GM12878 (cell line): ENCODE measurements at regions of chr10 and their contacts with region 1.

Region 1: GRCh38 chr10:103396064-103396788 is at the starts of genes ATP5MK and PDCD11:
- DNase-seq: peak; percentile 92
- ATAC-seq: peak; percentile 98
- H3K4me3 ChIP-seq: peak within 1 kb of the TSS; percentile 89
- H3K27ac ChIP-seq: peak within 1 kb of the TSS; percentile 88
- H3K4me1 ChIP-seq: peaks cover 4% of the 10 kb centered on the region; the same call in 1 of the 2 replicates
- H3K27me3 ChIP-seq: no peaks in the 10 kb centered on the region
- CTCF ChIP-seq: peak; percentile 16 to 35 (median 31); a peak in 3 of 6 replicates
- EP300 ChIP-seq: peak in 1 of 2 experiments; percentile 40; a peak in 1 of 4 replicates
- POLR2A ChIP-seq: peak; percentile 97
- RAD21 ChIP-seq: 0 out of 2 replicates have a peak, but pooled peaks have one; percentile 3
- polyA plus RNA-seq, gene ATP5MK: 1,633 to 1,790 TPM
- polyA plus RNA-seq, gene PDCD11: 13.9 to 17.2 TPM

Region 2: GRCh38 chr10:103350501-103351260 is 45.5 kb before region 1 on chr10 and contains the start of gene PCGF6:
- CTCF ChIA-PET with region 1: no interaction called
- POLR2A ChIA-PET with region 1: interaction called, 5 read pairs
- RAD21 ChIA-PET with region 1: interaction called, 4 read pairs
- SMC1A ChIA-PET with region 1: interaction called, 3 read pairs
- in situ Hi-C with region 1: no loop called
- intact Hi-C with region 1: loop called (anchors 5 kb)
- DNase-seq: no peak
- ATAC-seq: peak; percentile 94
- H3K4me3 ChIP-seq: peak within 1 kb of the TSS; percentile 85
- H3K27ac ChIP-seq: peak within 1 kb of the TSS; percentile 82
- H3K4me1 ChIP-seq: no peaks in the 10 kb centered on the region
- H3K27me3 ChIP-seq: no peaks in the 10 kb centered on the region
- CTCF ChIP-seq: no peak; a peak in 1 of 6 replicates
- EP300 ChIP-seq: no peak
- POLR2A ChIP-seq: peak; percentile 82
- RAD21 ChIP-seq: no peak
- polyA plus RNA-seq, gene PCGF6: 6.5 to 8.2 TPM

Region 3: DNA sequence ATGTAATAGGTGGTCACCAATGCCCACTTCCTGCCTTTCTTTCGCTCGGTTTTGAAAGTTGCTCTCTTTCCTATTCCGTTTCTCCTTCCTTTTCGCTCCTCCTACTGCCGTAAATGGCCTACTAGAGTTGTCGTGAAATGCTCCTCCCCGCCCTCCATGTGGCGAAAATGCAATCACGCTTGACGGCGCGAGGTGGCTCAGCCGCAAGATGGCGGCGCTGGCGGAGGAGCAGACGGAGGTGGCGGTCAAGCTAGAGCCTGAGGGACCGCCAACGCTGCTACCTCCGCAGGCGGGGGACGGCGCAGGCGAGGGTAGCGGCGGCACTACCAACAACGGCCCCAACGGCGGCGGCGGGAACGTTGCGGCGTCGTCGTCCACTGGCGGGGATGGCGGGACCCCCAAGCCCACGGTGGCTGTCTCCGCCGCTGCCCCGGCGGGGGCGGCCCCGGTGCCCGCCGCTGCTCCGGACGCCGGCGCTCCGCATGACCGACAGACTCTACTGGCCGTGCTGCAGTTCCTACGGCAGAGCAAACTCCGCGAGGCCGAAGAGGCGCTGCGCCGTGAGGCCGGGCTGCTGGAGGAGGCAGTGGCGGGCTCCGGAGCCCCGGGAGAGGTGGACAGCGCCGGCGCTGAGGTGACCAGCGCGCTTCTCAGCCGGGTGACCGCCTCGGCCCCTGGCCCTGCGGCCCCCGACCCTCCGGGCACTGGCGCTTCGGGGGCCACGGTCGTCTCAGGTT is 28.3 kb before region 1 on chr10 and contains the start of gene TAF5:
- CTCF ChIA-PET with region 1: interaction called, 11 read pairs
- POLR2A ChIA-PET with region 1: interaction called, 17 read pairs
- RAD21 ChIA-PET with region 1: interaction called, 3 read pairs
- SMC1A ChIA-PET with region 1: interaction called, 23 read pairs
- in situ Hi-C with region 1: no loop called
- intact Hi-C with region 1: loop called (anchors 1 kb)
- DNase-seq: peak; percentile 95
- ATAC-seq: peak; percentile 82
- H3K4me3 ChIP-seq: peak within 1 kb of the TSS; percentile 75
- H3K27ac ChIP-seq: peak within 1 kb of the TSS; percentile 81
- H3K4me1 ChIP-seq: peaks cover 12% of the 10 kb centered on the region
- H3K27me3 ChIP-seq: no peaks in the 10 kb centered on the region
- CTCF ChIP-seq: no peak
- EP300 ChIP-seq: no peak
- POLR2A ChIP-seq: peak; percentile 86
- RAD21 ChIP-seq: no peak
- polyA plus RNA-seq, gene TAF5: 3.7 to 3.8 TPM

Region 4: DNA sequence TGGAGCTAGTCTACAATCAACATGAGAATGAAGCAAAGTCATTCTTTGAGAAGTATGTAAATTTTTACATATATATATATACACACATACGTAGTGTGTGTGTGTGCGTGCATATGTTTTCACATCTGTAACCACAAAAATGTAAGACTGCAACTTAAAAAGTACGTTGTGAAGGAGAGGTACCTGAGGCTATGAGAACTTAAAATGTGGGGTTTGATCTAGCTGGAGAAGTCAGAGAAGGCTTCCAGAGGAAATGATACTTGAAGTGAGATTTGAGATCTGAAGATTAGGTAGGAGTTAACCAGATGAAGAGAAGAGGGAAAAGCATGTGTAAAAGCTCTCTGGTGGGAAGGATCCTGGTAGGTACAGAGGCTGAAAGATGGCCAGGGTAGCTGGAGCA is 22.7 kb before region 1 on chr10:
- CTCF ChIA-PET with region 1: interaction called, 11 read pairs
- POLR2A ChIA-PET with region 1: interaction called, 17 read pairs
- RAD21 ChIA-PET with region 1: interaction called, 3 read pairs
- SMC1A ChIA-PET with region 1: interaction called, 23 read pairs
- in situ Hi-C with region 1: no loop called
- intact Hi-C with region 1: loop called (anchors 1 kb)
- DNase-seq: no peak
- ATAC-seq: peak; percentile 57
- H3K4me3 ChIP-seq: peak overlapping the region; percentile 22; the same call in 1 of the 2 replicates
- H3K27ac ChIP-seq: peak overlapping the region; percentile 71
- H3K4me1 ChIP-seq: peaks cover 20% of the 10 kb centered on the region
- H3K27me3 ChIP-seq: no peaks in the 10 kb centered on the region
- CTCF ChIP-seq: no peak
- EP300 ChIP-seq: no peak
- POLR2A ChIP-seq: no peak
- RAD21 ChIP-seq: no peak